CD4-positive, alpha-beta memory T cell (primary cell): ENCODE measurements at regions of chr2 and their contacts with region 1.

Region 1: GRCh38 chr2:237685408-237685807 is 58.0 kb downstream of the LRRFIP1 start:
- DNase-seq: no peak
- H3K4me3 ChIP-seq: no peak overlapping the region
- H3K4me3 Mint-ChIP-seq: no peak overlapping the region
- H3K27ac ChIP-seq: no peak overlapping the region
- H3K27ac Mint-ChIP-seq: peak overlapping the region in 6 of 7 donors; percentile 60 to 100 (median 100)
- H3K4me1 ChIP-seq: peaks cover 46% of the 10 kb centered on the region
- H3K4me1 Mint-ChIP-seq: peaks cover 42 to 61% (median 48%) of the 10 kb centered on the region in 4 donors
- H3K27me3 ChIP-seq: no peaks in the 10 kb centered on the region
- H3K27me3 Mint-ChIP-seq: no peaks in the 10 kb centered on the region

Region 2: GRCh38 chr2:237616734-237617586 is 68.4 kb before region 1 on chr2:
- CTCF ChIA-PET with region 1: no interaction called
- POLR2A ChIA-PET with region 1: no interaction called
- intact Hi-C with region 1: no loop called
- DNase-seq: peak in 3 of 5 donors; percentile 29 to 34 (median 31)
- H3K4me3 ChIP-seq: no peak overlapping the region
- H3K4me3 Mint-ChIP-seq: peak overlapping the region; percentile 28 to 86 (median 70)
- H3K27ac ChIP-seq: no peak overlapping the region
- H3K27ac Mint-ChIP-seq: peak overlapping the region in 6 of 7 donors; percentile 16 to 91 (median 70)
- H3K4me1 ChIP-seq: peaks cover 23% of the 10 kb centered on the region
- H3K4me1 Mint-ChIP-seq: peaks cover 15 to 38% (median 18%) of the 10 kb centered on the region in 4 donors
- H3K27me3 ChIP-seq: no peaks in the 10 kb centered on the region
- H3K27me3 Mint-ChIP-seq: no peaks in the 10 kb centered on the region

Region 3: DNA sequence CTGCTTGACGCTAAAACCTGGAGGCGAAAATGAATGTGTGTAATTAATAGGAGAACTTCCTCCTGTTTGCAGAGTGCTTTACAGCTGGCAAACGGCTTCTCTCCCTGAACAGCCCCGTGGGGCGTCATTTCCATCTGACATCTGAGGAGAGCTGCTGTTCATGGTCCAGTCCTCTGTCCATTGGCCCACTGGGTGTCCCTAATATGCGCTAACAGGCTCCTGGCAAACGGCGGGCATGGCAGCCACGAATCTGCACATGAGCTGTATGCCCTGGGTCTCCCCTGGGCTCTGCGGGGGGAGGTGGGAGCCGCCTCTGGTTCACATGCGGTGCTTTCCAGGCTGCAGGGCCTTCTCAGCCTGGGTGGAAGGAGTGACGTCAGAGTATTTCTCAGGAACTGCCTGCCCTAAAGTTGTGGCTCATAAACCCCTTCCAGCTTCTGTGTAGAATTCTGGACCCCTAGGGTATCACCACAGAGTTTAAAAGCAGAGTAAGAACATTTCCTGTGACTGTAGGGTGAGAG is 15.2 kb after region 1 on chr2:
- CTCF ChIA-PET with region 1: interaction called, 15 read pairs
- POLR2A ChIA-PET with region 1: interaction called, 210 read pairs
- intact Hi-C with region 1: no loop called
- DNase-seq: peak; percentile 60 to 94 (median 66)
- H3K4me3 ChIP-seq: no peak overlapping the region
- H3K4me3 Mint-ChIP-seq: peak overlapping the region; percentile 61 to 93 (median 82)
- H3K27ac ChIP-seq: peak overlapping the region; percentile 70
- H3K27ac Mint-ChIP-seq: peak overlapping the region; percentile 90 to 96 (median 96)
- H3K4me1 ChIP-seq: peaks cover 100% of the 10 kb centered on the region
- H3K4me1 Mint-ChIP-seq: peaks cover 76 to 100% (median 93%) of the 10 kb centered on the region in 4 donors
- H3K27me3 ChIP-seq: no peaks in the 10 kb centered on the region
- H3K27me3 Mint-ChIP-seq: no peaks in the 10 kb centered on the region